ENCODE measurements at regions of chr2 and their contacts with region 1.

Region 1: DNA sequence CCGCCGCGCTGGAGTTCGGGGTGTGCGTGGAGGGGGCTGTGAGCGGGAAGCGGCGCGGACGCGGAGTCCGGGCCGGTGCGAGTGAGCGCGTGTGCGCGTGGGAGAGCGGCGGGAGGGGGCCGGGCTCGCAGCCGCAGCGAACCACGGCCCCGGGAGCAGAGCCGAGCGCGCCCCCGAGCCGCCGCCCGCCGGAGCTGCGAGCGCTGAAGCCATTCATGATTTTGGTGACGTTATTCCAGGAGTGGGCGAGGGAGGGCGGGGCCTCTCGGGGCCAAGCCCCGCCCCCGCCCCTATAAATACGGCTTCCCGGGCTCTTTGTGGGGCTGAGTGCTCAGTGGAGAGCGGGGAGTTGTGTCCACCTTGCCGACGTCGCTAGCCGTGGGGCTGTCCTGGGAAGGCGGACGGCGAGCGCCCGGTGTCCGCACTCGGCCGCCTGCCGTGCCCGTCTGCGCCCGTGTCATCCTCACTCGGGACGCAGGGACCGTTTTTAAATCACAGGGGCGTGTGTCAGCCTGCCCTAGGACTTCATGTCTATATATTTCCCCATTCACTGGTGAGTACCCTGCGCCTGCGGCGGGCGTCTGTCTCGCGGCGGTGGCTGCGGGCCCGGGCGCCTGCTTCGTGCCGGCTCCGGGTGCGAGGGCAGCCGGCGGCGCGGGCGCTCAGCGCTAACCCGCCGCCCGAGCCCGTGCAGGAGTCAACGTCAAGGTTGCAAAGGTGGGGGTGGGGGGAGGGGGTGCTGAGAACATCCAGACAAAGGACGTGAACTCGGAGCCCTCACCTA is at the start of gene LBH:
- DNase-seq: peak; percentile 65
- ATAC-seq: peak; percentile 52
- H3K4me3 Mint-ChIP-seq: peak within 1 kb of the TSS; percentile 83
- H3K27ac Mint-ChIP-seq: no peak within 1 kb of the TSS
- H3K4me1 Mint-ChIP-seq: peaks cover 31% of the 10 kb centered on the region
- H3K27me3 Mint-ChIP-seq: peaks cover 39% of the 10 kb centered on the region
- CTCF ChIP-seq: no peak
- total RNA-seq, gene LBH: 30.8 to 47.3 TPM (median 34.7 TPM) in 3 replicates

Region 2: GRCh38 chr2:30146438-30147147 is 84.8 kb before region 1 on chr2 and contains the start of gene YPEL5:
- CTCF ChIA-PET with region 1: interaction called, 5 read pairs
- POLR2A ChIA-PET with region 1: interaction called, 10 read pairs
- DNase-seq: peak; percentile 99
- ATAC-seq: peak; percentile 96
- H3K4me3 Mint-ChIP-seq: peak within 1 kb of the TSS; percentile 86
- H3K27ac Mint-ChIP-seq: peak within 1 kb of the TSS; percentile 92
- H3K4me1 Mint-ChIP-seq: peaks cover 41% of the 10 kb centered on the region
- H3K27me3 Mint-ChIP-seq: peaks cover 13% of the 10 kb centered on the region
- CTCF ChIP-seq: no peak
- total RNA-seq, gene YPEL5: 25.3 to 27.3 TPM (median 26.5 TPM) in 3 replicates

Region 3: GRCh38 chr2:30208452-30208851 is 23.0 kb before region 1 on chr2:
- CTCF ChIA-PET with region 1: interaction called, 12 read pairs
- POLR2A ChIA-PET with region 1: interaction called, 6 read pairs
- DNase-seq: peak; percentile 59
- ATAC-seq: peak; percentile 99
- H3K4me3 Mint-ChIP-seq: no peak overlapping the region
- H3K27ac Mint-ChIP-seq: no peak overlapping the region
- H3K4me1 Mint-ChIP-seq: peaks cover 6% of the 10 kb centered on the region
- H3K27me3 Mint-ChIP-seq: no peaks in the 10 kb centered on the region
- CTCF ChIP-seq: peak; percentile 82

Region 4: GRCh38 chr2:30346471-30347169 is 115.2 kb after region 1 on chr2:
- CTCF ChIA-PET with region 1: no interaction called
- POLR2A ChIA-PET with region 1: no interaction called
- DNase-seq: peak; percentile 65
- ATAC-seq: peak; percentile 100
- H3K4me3 Mint-ChIP-seq: peak overlapping the region; percentile 32
- H3K27ac Mint-ChIP-seq: no peak overlapping the region
- H3K4me1 Mint-ChIP-seq: peaks cover 14% of the 10 kb centered on the region
- H3K27me3 Mint-ChIP-seq: peaks cover 7% of the 10 kb centered on the region
- CTCF ChIP-seq: no peak